Caco-2 (cell line): ENCODE measurements at regions of chr7 and their contacts with region 1.

Region 1: GRCh38 chr7:129468087-129468486 is 33.9 kb downstream of the STRIP2 start:
- DNase-seq: no peak
- H3K4me3 ChIP-seq: no peak overlapping the region
- H3K4me3 Mint-ChIP-seq: no peak overlapping the region
- H3K27ac Mint-ChIP-seq: no peak overlapping the region
- H3K4me1 ChIP-seq: no peaks in the 10 kb centered on the region
- H3K4me1 Mint-ChIP-seq: no peaks in the 10 kb centered on the region
- H3K27me3 ChIP-seq: no peaks in the 10 kb centered on the region
- H3K27me3 Mint-ChIP-seq: no peaks in the 10 kb centered on the region
- CTCF ChIP-seq: no peak

Region 2: GRCh38 chr7:129218514-129219062 is 249.5 kb before region 1 on chr7:
- CTCF ChIA-PET with region 1: interaction called, 9 read pairs
- POLR2A ChIA-PET with region 1: no interaction called
- intact Hi-C with region 1: loop called (anchors 1 kb)
- DNase-seq: peak; percentile 80 to 89
- H3K4me3 ChIP-seq: no peak overlapping the region
- H3K4me3 Mint-ChIP-seq: no peak overlapping the region
- H3K27ac Mint-ChIP-seq: no peak overlapping the region
- H3K4me1 ChIP-seq: 0 out of 2 replicates have a peak, but pooled peaks cover 1% of the 10 kb centered on the region
- H3K4me1 Mint-ChIP-seq: peaks cover 8% of the 10 kb centered on the region
- H3K27me3 ChIP-seq: no peaks in the 10 kb centered on the region
- H3K27me3 Mint-ChIP-seq: no peaks in the 10 kb centered on the region
- CTCF ChIP-seq: peak; percentile 91

Region 3: DNA sequence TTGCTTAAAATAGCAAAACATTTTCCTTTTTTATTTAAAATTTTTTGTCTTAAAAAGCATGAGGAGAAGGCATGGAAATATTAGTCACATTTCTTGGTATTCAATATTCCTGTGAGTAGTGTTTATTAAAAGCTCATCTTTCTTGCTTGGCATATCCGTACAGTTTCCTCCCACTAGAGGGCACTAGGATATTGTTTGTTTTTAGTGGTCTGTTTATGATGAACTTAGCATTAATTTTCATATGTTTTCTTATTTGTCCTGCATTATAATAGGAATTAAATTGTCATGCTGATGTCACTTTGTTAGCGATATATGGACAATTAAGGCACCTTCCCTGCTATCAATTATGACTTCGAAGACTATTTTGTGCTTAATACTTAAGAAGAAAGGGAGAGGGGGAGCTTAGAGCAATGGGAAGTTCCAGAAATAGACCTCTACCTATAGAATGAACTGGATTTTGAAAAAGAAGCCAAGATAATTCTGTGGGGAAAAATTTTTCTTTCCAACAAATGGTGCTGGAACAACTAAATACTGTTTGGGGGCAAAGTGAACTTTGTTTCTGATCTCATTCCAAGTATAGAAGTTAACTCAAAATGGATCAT is 124.9 kb before region 1 on chr7:
- CTCF ChIA-PET with region 1: no interaction called
- POLR2A ChIA-PET with region 1: no interaction called
- intact Hi-C with region 1: loop called (anchors 1 kb)
- DNase-seq: peak in 1 of 2 experiments; percentile 44
- H3K4me3 ChIP-seq: no peak overlapping the region
- H3K4me3 Mint-ChIP-seq: no peak overlapping the region
- H3K27ac Mint-ChIP-seq: no peak overlapping the region
- H3K4me1 ChIP-seq: no peaks in the 10 kb centered on the region
- H3K4me1 Mint-ChIP-seq: peaks cover 20% of the 10 kb centered on the region
- H3K27me3 ChIP-seq: no peaks in the 10 kb centered on the region
- H3K27me3 Mint-ChIP-seq: no peaks in the 10 kb centered on the region
- CTCF ChIP-seq: peak; percentile 69

Region 4: GRCh38 chr7:129401967-129402860 is 65.9 kb before region 1 on chr7:
- CTCF ChIA-PET with region 1: interaction called, 8 read pairs
- POLR2A ChIA-PET with region 1: no interaction called
- intact Hi-C with region 1: loop called (anchors 2 kb)
- DNase-seq: no peak
- H3K4me3 ChIP-seq: no peak overlapping the region
- H3K4me3 Mint-ChIP-seq: no peak overlapping the region
- H3K27ac Mint-ChIP-seq: no peak overlapping the region
- H3K4me1 ChIP-seq: no peaks in the 10 kb centered on the region; the same call in 1 of the 2 replicates
- H3K4me1 Mint-ChIP-seq: no peaks in the 10 kb centered on the region
- H3K27me3 ChIP-seq: no peaks in the 10 kb centered on the region
- H3K27me3 Mint-ChIP-seq: no peaks in the 10 kb centered on the region
- CTCF ChIP-seq: no peak

Region 5: DNA sequence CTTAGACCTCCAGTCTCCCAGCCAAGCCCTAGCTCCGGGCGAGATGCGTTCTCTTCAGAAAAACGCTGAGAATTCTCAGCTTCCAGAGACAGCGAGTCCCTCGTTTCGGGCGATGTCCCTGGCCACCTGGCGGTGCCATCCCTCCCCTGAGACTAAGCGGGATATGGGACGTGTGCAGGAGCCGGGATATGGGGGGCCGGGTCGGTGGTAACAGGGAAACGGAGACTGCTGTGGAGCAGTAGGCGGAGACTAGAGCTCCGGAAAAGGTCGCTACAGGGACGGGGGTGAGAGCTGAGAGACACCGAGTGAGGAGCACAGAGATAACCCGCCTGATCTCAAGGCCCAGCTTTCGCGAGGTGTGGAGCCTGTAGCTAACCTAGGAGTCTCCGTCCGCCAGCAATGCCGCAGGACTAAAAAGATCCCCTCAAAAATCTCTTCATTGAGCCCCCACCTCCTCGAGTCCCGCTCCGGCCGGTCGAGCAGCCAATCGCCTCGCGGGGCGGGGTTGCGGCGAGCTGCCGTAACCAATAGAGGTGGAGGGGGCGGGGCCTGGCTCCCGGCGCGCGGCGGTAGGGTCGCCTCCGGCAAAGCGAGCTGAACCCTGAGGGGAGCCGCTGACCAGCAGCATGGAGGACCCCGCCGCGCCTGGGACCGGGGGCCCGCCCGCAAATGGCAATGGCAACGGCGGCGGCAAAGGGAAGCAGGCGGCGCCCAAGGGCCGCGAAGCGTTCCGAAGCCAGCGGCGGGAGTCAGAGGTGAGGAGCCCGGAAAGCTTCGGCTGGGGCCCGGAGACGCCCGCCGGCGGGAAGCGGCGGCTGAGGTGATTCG is 34.0 kb before region 1 on chr7 and contains the start of gene STRIP2:
- CTCF ChIA-PET with region 1: interaction called, 4 read pairs
- POLR2A ChIA-PET with region 1: no interaction called
- intact Hi-C with region 1: loop called (anchors 2 kb)
- DNase-seq: peak; percentile 92 to 96
- H3K4me3 ChIP-seq: peak within 1 kb of the TSS; percentile 87
- H3K4me3 Mint-ChIP-seq: peak within 1 kb of the TSS; percentile 99
- H3K27ac Mint-ChIP-seq: peak within 1 kb of the TSS; percentile 87
- H3K4me1 ChIP-seq: no peaks in the 10 kb centered on the region; the same call in 1 of the 2 replicates
- H3K4me1 Mint-ChIP-seq: peaks cover 8% of the 10 kb centered on the region
- H3K27me3 ChIP-seq: no peaks in the 10 kb centered on the region
- H3K27me3 Mint-ChIP-seq: peaks cover 7% of the 10 kb centered on the region
- CTCF ChIP-seq: peak in 1 of 2 experiments; percentile 39
- total RNA-seq, gene STRIP2: 5.8 and 6.5 TPM in 2 replicates

Region 6: GRCh38 chr7:129644634-129645230 is 176.6 kb after region 1 on chr7:
- CTCF ChIA-PET with region 1: no interaction called
- POLR2A ChIA-PET with region 1: no interaction called
- intact Hi-C with region 1: loop called (anchors 1 kb)
- DNase-seq: peak in 1 of 2 experiments; percentile 40
- H3K4me3 ChIP-seq: no peak overlapping the region
- H3K4me3 Mint-ChIP-seq: no peak overlapping the region
- H3K27ac Mint-ChIP-seq: no peak overlapping the region
- H3K4me1 ChIP-seq: no peaks in the 10 kb centered on the region
- H3K4me1 Mint-ChIP-seq: no peaks in the 10 kb centered on the region
- H3K27me3 ChIP-seq: no peaks in the 10 kb centered on the region
- H3K27me3 Mint-ChIP-seq: no peaks in the 10 kb centered on the region
- CTCF ChIP-seq: peak; percentile 49 to 51